Heart right ventricle (tissue), 16 donors: ENCODE measurements at regions of chr2 and their contacts with region 1.

Region 1: GRCh38 chr2:42974721-42975717 is 182.6 kb upstream of the HAAO start:
- DNase-seq: peak; percentile 79 to 85
- ATAC-seq: peak; percentile 85 to 92 (median 88)
- H3K4me3 ChIP-seq: peak overlapping the region in 9 of 10 donors; percentile 16 to 61 (median 52)
- H3K27ac ChIP-seq: peak overlapping the region in 6 of 10 donors; percentile 59 to 81 (median 72)
- H3K4me1 ChIP-seq: peaks cover 12 to 32% (median 19%) of the 10 kb centered on the region in 9 donors
- H3K27me3 ChIP-seq: no peaks in the 10 kb centered on the region
- CTCF ChIP-seq: peak; percentile 86 to 97 (median 89)

Region 2: DNA sequence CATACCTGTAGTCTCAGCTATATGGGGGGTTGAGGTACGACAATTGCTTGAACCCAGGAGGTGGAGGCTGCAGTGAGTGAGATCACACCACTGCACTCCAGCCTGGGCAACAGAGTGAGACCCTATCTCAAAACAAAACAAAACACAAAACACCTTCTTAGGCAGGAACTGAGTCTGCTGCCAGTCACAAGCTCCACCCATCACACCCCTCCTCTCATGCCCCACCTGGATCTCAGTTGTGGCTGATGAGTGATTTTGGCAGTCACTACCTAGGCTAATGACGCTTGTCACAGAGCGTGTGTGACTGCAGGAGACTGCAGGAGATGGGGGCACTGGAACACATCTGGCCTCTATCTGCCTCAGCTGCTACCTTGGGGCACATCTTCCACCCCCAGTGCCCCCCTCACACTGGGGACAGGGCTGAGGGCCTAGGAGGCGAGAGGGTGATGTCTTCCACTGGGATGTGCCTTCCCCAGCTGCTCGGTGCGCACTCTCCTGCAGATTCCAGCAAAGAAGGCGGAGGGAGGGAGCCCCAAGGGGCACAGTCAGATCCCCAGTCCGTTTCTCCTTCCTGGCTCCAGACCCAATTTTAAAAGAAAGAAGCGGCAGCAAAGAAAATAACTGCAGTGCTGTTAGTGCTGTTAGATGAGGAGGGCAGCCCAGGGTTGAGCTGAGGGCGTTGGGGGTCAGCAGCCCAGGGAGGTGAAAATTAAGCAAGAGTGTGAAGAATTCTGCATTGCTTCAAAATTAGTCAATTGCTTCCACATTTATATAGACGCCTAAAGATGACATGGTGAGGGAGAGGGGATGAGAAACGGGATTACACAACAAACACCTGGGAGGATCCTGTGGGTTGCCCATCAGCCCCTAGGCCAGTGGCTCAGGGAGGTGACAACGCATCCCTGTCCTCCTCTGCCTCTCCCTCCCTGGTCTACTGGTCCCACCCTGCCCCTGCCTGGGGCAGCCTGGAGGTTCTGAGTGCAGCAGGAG is 39.0 kb before region 1 on chr2:
- intact Hi-C with region 1: no loop called
- DNase-seq: no peak
- ATAC-seq: peak in 2 of 8 donors; percentile 13 to 26
- H3K4me3 ChIP-seq: no peak overlapping the region
- H3K27ac ChIP-seq: peak overlapping the region in 6 of 10 donors; percentile 9 to 69 (median 44)
- H3K4me1 ChIP-seq: peaks cover 14 to 78% (median 57%) of the 10 kb centered on the region in 9 donors
- H3K27me3 ChIP-seq: no peaks in the 10 kb centered on the region
- CTCF ChIP-seq: no peak

Region 3: GRCh38 chr2:43034921-43035320 is 59.9 kb after region 1 on chr2:
- intact Hi-C with region 1: no loop called
- DNase-seq: no peak
- ATAC-seq: no peak
- H3K4me3 ChIP-seq: no peak overlapping the region
- H3K27ac ChIP-seq: no peak overlapping the region
- H3K4me1 ChIP-seq: peaks cover 7 to 23% (median 14%) of the 10 kb centered on the region in 9 donors
- H3K27me3 ChIP-seq: no peaks in the 10 kb centered on the region
- CTCF ChIP-seq: no peak

Region 4: GRCh38 chr2:43086451-43087221 is 111.6 kb after region 1 on chr2:
- intact Hi-C with region 1: loop called in 1 of 10 experiments (anchors 10 kb)
- DNase-seq: peak; percentile 51 to 88
- ATAC-seq: peak; percentile 75 to 89 (median 84)
- H3K4me3 ChIP-seq: no peak overlapping the region
- H3K27ac ChIP-seq: peak overlapping the region; percentile 76 to 93 (median 90)
- H3K4me1 ChIP-seq: peaks cover 48 to 67% (median 61%) of the 10 kb centered on the region in 9 donors
- H3K27me3 ChIP-seq: no peaks in the 10 kb centered on the region
- CTCF ChIP-seq: no peak

Region 5: DNA sequence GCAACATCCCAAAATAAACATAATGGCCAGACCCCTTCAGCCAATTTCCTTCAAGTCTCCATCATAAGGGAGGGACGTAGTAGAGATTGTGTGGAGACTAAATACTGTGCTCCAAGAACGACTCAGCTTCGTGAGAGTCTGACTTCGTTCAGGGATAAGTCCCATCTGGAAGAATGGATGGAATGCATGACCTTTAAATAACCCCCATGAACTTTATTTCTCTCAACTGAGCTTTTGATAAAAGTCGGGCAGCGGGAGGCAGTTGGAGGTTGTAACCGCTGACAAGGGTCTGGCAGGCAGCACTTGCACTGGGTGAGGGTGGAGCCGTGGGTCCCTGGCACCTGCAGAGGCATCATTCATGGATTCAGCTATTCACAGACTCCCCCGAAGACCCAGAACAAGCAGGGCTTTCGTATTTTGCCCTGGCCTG is 135.4 kb after region 1 on chr2:
- intact Hi-C with region 1: loop called in 1 of 10 experiments (anchors 5 kb)
- DNase-seq: peak; percentile 32 to 37
- ATAC-seq: peak; percentile 20 to 68 (median 42)
- H3K4me3 ChIP-seq: no peak overlapping the region
- H3K27ac ChIP-seq: peak overlapping the region in 9 of 10 donors; percentile 2 to 90 (median 55)
- H3K4me1 ChIP-seq: peaks cover 4 to 84% (median 68%) of the 10 kb centered on the region in 9 donors
- H3K27me3 ChIP-seq: no peaks in the 10 kb centered on the region
- CTCF ChIP-seq: no peak

Region 6: DNA sequence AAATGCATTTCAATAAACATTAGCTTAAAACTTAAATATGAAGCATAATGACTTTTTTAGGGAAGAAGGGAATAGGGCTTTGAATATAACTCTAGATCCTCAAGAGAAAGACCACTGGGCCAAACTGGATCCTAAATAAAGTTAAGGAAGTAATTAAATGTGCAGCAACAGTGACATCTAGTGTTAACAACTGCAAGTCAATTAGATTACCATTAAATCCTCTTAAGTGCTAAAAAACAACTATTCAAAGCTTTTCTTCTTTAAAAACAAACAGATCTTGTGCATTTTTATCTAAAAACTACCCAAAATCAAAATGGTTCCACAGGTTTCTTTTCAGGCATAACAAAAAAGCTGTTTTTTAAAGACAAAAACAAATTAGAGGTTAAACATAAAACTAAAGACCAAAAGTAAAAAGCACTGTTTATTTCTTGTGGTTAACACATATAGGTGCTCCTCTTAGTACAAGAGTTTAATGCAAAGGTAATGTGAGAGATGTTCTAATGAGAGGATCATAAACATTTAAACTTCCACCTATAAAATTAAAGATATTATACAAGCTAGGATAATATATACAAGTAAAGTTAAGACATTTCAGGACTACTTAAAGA is 509.4 kb after region 1 on chr2:
- intact Hi-C with region 1: loop called in 9 of 10 experiments (anchors 2 to 10 kb)
- DNase-seq: peak in 1 of 2 donors; percentile 20
- ATAC-seq: peak in 6 of 8 donors; percentile 60 to 68 (median 64)
- H3K4me3 ChIP-seq: no peak overlapping the region
- H3K27ac ChIP-seq: peak overlapping the region in 5 of 10 donors; percentile 13 to 69 (median 65)
- H3K4me1 ChIP-seq: peaks cover 8 to 48% (median 29%) of the 10 kb centered on the region in 9 donors
- H3K27me3 ChIP-seq: no peaks in the 10 kb centered on the region
- CTCF ChIP-seq: peak; percentile 27 to 83 (median 71)